ENCODE measurements at regions of chr13 and their contacts with region 1.

Region 1: GRCh38 chr13:35164324-35164932 is 222.4 kb downstream of the NBEA start:
- DNase-seq: peak in 1 of 2 experiments; percentile 7
- H3K4me3 ChIP-seq: no peak overlapping the region
- H3K4me3 Mint-ChIP-seq: no peak overlapping the region
- H3K27ac Mint-ChIP-seq: no peak overlapping the region
- H3K4me1 ChIP-seq: no peaks in the 10 kb centered on the region
- H3K4me1 Mint-ChIP-seq: no peaks in the 10 kb centered on the region
- H3K27me3 ChIP-seq: no peaks in the 10 kb centered on the region
- H3K27me3 Mint-ChIP-seq: no peaks in the 10 kb centered on the region
- CTCF ChIP-seq: peak; percentile 66 to 67

Region 2: DNA sequence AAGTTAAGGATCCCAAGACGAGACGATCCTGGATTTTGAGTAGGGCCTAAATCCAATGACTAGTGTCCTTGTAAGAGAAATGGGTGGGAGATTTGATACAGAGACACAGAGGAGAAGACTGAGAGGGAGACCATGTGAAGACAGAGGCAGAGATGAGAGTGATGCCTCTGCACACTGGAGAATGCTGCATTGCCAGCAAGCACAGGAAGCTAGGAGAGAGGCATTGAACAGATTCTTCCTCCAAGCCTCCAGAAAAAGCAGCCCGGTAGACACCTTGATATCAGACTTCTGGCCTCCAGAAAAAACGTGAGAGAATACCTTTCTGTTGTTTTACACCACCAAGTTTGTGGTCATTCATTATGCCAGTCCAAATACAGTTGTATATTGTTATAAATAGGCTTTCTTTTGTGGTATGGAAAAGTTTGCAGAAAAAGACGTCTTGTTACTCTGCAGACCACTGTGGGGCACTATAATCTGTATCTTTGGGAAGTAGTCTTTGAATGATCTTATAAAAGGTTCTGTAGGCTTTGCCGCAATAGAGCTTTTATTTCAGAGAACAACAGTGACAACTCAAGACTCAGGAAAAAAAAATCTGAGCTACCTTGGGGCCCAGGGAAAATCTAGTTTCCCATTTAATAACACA is 1364.4 kb before region 1 on chr13:
- CTCF ChIA-PET with region 1: no interaction called
- POLR2A ChIA-PET with region 1: no interaction called
- intact Hi-C with region 1: loop called (anchors 5 kb)
- DNase-seq: no peak
- H3K4me3 ChIP-seq: no peak overlapping the region
- H3K4me3 Mint-ChIP-seq: no peak overlapping the region
- H3K27ac Mint-ChIP-seq: no peak overlapping the region
- H3K4me1 ChIP-seq: no peaks in the 10 kb centered on the region
- H3K4me1 Mint-ChIP-seq: no peaks in the 10 kb centered on the region
- H3K27me3 ChIP-seq: no peaks in the 10 kb centered on the region
- H3K27me3 Mint-ChIP-seq: peaks cover 15% of the 10 kb centered on the region
- CTCF ChIP-seq: peak in 1 of 2 experiments; percentile 42

Region 3: GRCh38 chr13:35309706-35310105 is 145.3 kb after region 1 on chr13:
- CTCF ChIA-PET with region 1: no interaction called
- POLR2A ChIA-PET with region 1: no interaction called
- intact Hi-C with region 1: no loop called
- DNase-seq: no peak
- H3K4me3 ChIP-seq: no peak overlapping the region
- H3K4me3 Mint-ChIP-seq: no peak overlapping the region
- H3K27ac Mint-ChIP-seq: no peak overlapping the region
- H3K4me1 ChIP-seq: no peaks in the 10 kb centered on the region
- H3K4me1 Mint-ChIP-seq: no peaks in the 10 kb centered on the region
- H3K27me3 ChIP-seq: no peaks in the 10 kb centered on the region
- H3K27me3 Mint-ChIP-seq: peaks cover 3% of the 10 kb centered on the region
- CTCF ChIP-seq: no peak

Measured in Caco-2 (cell line).